ENCODE measurements at regions of chr18 and their contacts with region 1.

Region 1: GRCh38 chr18:53305461-53305860 is 919.0 kb downstream of the MBD2 start:
- DNase-seq: no peak
- H3K4me3 ChIP-seq: no peak overlapping the region
- H3K27ac ChIP-seq: no peak overlapping the region
- H3K4me1 ChIP-seq: no peaks in the 10 kb centered on the region
- H3K27me3 ChIP-seq: no peaks in the 10 kb centered on the region
- CTCF ChIP-seq: no peak

Region 2: GRCh38 chr18:53253789-53254188 is 51.7 kb before region 1 on chr18:
- intact Hi-C with region 1: loop called (anchors 5 kb)
- DNase-seq: no peak
- H3K4me3 ChIP-seq: no peak overlapping the region
- H3K27ac ChIP-seq: no peak overlapping the region
- H3K4me1 ChIP-seq: no peaks in the 10 kb centered on the region
- H3K27me3 ChIP-seq: no peaks in the 10 kb centered on the region
- CTCF ChIP-seq: no peak

Region 3: GRCh38 chr18:53324353-53324752 is 18.9 kb after region 1 on chr18:
- intact Hi-C with region 1: no loop called
- DNase-seq: no peak
- H3K4me3 ChIP-seq: no peak overlapping the region
- H3K27ac ChIP-seq: no peak overlapping the region
- H3K4me1 ChIP-seq: no peaks in the 10 kb centered on the region
- H3K27me3 ChIP-seq: no peaks in the 10 kb centered on the region
- CTCF ChIP-seq: no peak

Measured in tibial artery (tissue), 4 donors.